A549 (cell line): ENCODE measurements at regions of chr10 and their contacts with region 1.

Region 1: GRCh38 chr10:119750391-119751230 is 24.8 kb downstream of the INPP5F start:
- DNase-seq: peak; percentile 54 to 80
- ATAC-seq: peak; percentile 97 to 99
- H3K4me3 ChIP-seq: no peak overlapping the region
- H3K27ac ChIP-seq: no peak overlapping the region
- H3K4me1 ChIP-seq: peaks cover 8% of the 10 kb centered on the region
- CTCF ChIP-seq: peak; percentile 88
- EP300 ChIP-seq: no peak
- POLR2A ChIP-seq: no peak
- RAD21 ChIP-seq: peak; percentile 91 to 96

Region 2: DNA sequence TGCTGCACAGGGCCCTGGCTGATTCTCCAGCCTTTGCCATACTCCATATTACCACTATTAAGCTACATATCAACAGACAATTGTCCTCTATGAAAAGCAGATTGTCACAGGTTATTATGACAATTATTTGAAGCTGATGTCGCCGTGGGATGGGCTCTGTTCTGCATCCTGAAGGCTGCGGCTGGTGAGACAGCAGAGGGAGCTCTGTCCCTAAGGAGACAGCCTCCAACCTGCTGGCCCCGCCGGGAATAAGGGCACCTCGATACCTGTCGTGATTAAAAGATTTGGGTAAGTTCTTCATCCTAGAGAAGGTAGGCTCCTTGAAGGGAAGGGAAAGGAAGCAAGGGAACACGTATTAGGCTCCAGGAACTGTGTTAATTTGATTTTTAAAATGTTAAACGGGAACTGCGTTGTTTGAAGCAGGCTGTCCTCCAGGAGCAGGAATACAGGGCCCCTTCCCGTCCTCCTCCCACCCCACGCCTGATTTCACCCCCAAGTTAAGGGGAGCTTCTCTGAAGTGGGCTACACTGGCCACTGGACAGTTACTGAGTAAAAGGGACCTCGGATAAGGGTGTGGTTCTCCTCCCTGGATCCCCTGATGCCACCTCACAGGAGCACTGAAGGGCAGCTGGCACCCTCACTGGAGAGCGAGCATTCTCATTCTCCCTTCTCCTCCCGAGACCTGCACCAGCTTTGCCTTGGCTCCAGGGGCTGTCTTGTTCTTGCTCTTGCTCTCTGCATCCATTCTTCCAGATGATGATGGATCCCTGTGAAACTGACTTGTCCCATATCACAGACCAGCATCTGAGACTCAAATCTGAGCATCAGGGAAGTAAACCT is 142.1 kb before region 1 on chr10:
- CTCF ChIA-PET with region 1: interaction called, 15 read pairs
- POLR2A ChIA-PET with region 1: no interaction called
- DNase-seq: peak; percentile 58 to 62
- ATAC-seq: peak; percentile 99 to 100
- H3K4me3 ChIP-seq: no peak overlapping the region
- H3K27ac ChIP-seq: peak overlapping the region; percentile 2 to 27; a peak in 1 of 6 replicates
- H3K4me1 ChIP-seq: no peaks in the 10 kb centered on the region
- CTCF ChIP-seq: peak; percentile 90
- EP300 ChIP-seq: no peak
- POLR2A ChIP-seq: no peak
- RAD21 ChIP-seq: peak; percentile 94

Region 3: GRCh38 chr10:119737827-119738226 is 12.8 kb before region 1 on chr10:
- CTCF ChIA-PET with region 1: interaction called, 83 read pairs
- POLR2A ChIA-PET with region 1: no interaction called
- DNase-seq: peak; percentile 81 to 94
- ATAC-seq: peak; percentile 99 to 100
- H3K4me3 ChIP-seq: no peak overlapping the region
- H3K27ac ChIP-seq: peak overlapping the region; percentile 46 to 64
- H3K4me1 ChIP-seq: peaks cover 32% of the 10 kb centered on the region
- CTCF ChIP-seq: no peak
- EP300 ChIP-seq: no peak
- POLR2A ChIP-seq: no peak
- RAD21 ChIP-seq: no peak

Region 4: GRCh38 chr10:119834188-119834587 is 83.6 kb after region 1 on chr10:
- CTCF ChIA-PET with region 1: interaction called, 14 read pairs
- POLR2A ChIA-PET with region 1: no interaction called
- DNase-seq: no peak
- ATAC-seq: no peak
- H3K4me3 ChIP-seq: no peak overlapping the region
- H3K27ac ChIP-seq: no peak overlapping the region
- H3K4me1 ChIP-seq: 0 out of 3 replicates have a peak, but pooled peaks cover 8% of the 10 kb centered on the region
- CTCF ChIP-seq: no peak
- EP300 ChIP-seq: no peak
- POLR2A ChIP-seq: no peak
- RAD21 ChIP-seq: no peak

Region 5: DNA sequence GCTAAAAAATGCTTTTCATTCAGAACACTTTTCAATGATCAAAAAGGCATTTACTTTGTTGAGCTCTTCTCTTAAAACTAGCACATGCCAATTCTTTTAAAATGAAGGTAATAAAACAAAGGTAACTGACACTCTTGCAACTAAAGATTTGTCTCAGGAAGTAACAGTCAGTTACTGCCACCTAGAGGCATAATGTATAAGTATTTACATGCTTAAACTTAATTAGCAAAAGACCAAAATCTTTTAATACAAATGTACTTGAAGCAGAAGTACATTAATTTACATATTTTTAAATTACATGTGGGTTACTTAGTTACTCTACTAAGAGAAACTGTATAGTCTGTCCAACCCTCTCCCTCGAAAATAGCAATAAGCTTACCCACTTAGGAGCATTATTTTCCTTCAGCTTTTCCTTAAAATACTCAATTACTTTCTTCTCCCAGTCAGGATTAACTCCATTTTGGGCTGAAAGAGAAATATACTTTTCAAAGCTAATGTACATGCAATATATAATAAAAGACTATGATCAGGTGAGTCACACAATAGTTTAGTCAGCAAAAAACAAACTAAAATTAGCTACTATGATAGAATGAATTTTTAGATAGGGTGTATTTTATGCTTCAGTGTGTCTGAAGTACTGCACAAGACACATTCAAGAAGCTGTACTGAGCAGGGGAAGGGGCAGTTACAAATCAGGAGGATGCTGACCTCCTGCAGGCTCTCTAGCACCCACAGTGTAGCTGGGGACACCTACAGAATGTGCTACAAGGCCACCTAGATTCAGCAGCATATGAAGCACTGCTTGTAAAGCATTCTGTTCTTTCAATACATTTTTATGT is 109.0 kb after region 1 on chr10:
- CTCF ChIA-PET with region 1: interaction called, 102 read pairs
- POLR2A ChIA-PET with region 1: no interaction called
- DNase-seq: peak; percentile 24 to 47
- ATAC-seq: peak in 1 of 2 experiments; percentile 63; a peak in 3 of 6 replicates
- H3K4me3 ChIP-seq: no peak overlapping the region
- H3K27ac ChIP-seq: no peak overlapping the region
- H3K4me1 ChIP-seq: peaks cover 15% of the 10 kb centered on the region
- CTCF ChIP-seq: peak; percentile 80
- EP300 ChIP-seq: no peak
- POLR2A ChIP-seq: no peak
- RAD21 ChIP-seq: peak; percentile 68 to 75

Region 6: DNA sequence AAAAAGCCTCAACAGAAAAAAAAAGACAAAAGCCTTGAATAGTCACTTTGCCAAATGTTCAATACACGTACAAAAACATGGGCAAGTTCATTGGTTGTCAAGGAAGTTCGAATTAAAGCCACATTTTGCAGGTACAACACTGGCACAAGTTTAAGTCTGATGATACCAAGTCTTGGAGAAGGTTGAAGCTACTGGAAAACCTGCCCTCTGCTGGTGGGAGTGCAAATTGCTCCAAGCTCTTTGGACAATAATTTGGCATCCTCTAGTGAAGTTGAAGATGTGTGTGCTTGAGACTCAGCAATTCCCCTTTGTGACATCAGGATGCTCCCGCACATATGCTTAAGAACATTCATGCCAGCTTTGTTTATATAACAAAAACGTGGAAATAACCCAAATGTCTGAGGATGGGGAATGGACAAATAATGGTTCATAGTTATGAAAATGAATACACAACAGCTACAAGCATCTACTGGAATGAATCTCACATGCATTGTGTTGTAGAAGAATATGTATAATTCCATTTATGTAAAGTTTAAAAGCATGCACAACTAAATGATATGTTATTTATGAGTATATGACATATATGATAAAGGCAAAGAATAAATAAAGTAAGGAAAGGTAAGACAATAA is 586.4 kb after region 1 on chr10:
- CTCF ChIA-PET with region 1: interaction called, 11 read pairs
- POLR2A ChIA-PET with region 1: no interaction called
- DNase-seq: peak; percentile 3 to 49
- ATAC-seq: peak in 1 of 2 experiments; percentile 69; a peak in 3 of 6 replicates
- H3K4me3 ChIP-seq: no peak overlapping the region
- H3K27ac ChIP-seq: no peak overlapping the region
- H3K4me1 ChIP-seq: no peaks in the 10 kb centered on the region
- CTCF ChIP-seq: peak; percentile 63
- EP300 ChIP-seq: no peak
- POLR2A ChIP-seq: no peak
- RAD21 ChIP-seq: peak; percentile 39 to 56; a peak in 4 of 5 replicates